H1 (cell line): ENCODE measurements at regions of chr1 and their contacts with region 1.

Region 1: GRCh38 chr1:208238710-208239472 is 5.3 kb downstream of the PLXNA2 start:
- DNase-seq: no peak
- H3K4me3 ChIP-seq: no peak overlapping the region; a peak in 1 of 8 replicates
- H3K27ac ChIP-seq: no peak overlapping the region
- H3K4me1 ChIP-seq: peaks cover 6 to 17% (median 11%) of the 10 kb centered on the region in 4 experiments
- H3K27me3 ChIP-seq: peaks cover 16 to 33% (median 28%) of the 10 kb centered on the region in 4 experiments
- CTCF ChIP-seq: peak; percentile 48 to 65 (median 59)
- EP300 ChIP-seq: no peak
- POLR2A ChIP-seq: no peak
- RAD21 ChIP-seq: peak; percentile 53 to 63

Region 2: DNA sequence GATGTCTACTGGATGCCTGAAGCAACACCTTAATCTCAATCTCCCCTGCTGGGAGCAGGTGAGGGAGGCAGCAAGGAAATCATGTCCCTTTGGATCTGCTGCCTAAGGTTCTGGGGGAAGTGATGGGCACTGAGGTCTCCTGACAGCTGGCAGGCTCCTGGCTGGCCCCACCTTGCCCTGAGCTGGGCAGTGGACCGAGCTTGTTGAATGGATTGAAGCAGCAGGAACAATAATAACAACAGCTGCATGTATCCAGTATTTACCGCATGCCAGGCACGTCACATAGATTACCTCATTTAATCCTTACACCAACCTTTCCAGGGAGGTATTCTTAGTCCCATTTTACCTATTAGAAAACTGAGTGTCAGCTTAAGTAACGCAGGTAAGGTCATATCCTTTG is 128.6 kb before region 1 on chr1:
- CTCF ChIA-PET with region 1: interaction called, 18 read pairs
- POLR2A ChIA-PET with region 1: no interaction called
- DNase-seq: no peak
- H3K4me3 ChIP-seq: no peak overlapping the region
- H3K27ac ChIP-seq: no peak overlapping the region
- H3K4me1 ChIP-seq: peaks cover 0 to 4% (median 0%) of the 10 kb centered on the region in 4 experiments; a peak in 3 of 7 replicates
- H3K27me3 ChIP-seq: no peaks in the 10 kb centered on the region
- CTCF ChIP-seq: no peak
- EP300 ChIP-seq: no peak
- POLR2A ChIP-seq: no peak
- RAD21 ChIP-seq: no peak

Region 3: GRCh38 chr1:208159555-208160258 is 79.2 kb before region 1 on chr1:
- CTCF ChIA-PET with region 1: interaction called, 10 read pairs
- POLR2A ChIA-PET with region 1: no interaction called
- DNase-seq: no peak
- H3K4me3 ChIP-seq: no peak overlapping the region
- H3K27ac ChIP-seq: no peak overlapping the region
- H3K4me1 ChIP-seq: peaks cover 4 to 21% (median 16%) of the 10 kb centered on the region in 4 experiments
- H3K27me3 ChIP-seq: 0 out of 7 replicates have a peak, but pooled peaks cover 0 to 4% (median 0%) of the 10 kb centered on the region in 4 experiments
- CTCF ChIP-seq: no peak
- EP300 ChIP-seq: no peak
- POLR2A ChIP-seq: no peak
- RAD21 ChIP-seq: no peak

Region 4: GRCh38 chr1:208201229-208201628 is 37.7 kb before region 1 on chr1:
- CTCF ChIA-PET with region 1: interaction called, 14 read pairs
- POLR2A ChIA-PET with region 1: no interaction called
- DNase-seq: no peak
- H3K4me3 ChIP-seq: no peak overlapping the region
- H3K27ac ChIP-seq: no peak overlapping the region
- H3K4me1 ChIP-seq: peaks cover 0 to 7% (median 0%) of the 10 kb centered on the region in 4 experiments; a peak in 2 of 7 replicates
- H3K27me3 ChIP-seq: no peaks in the 10 kb centered on the region
- CTCF ChIP-seq: no peak
- EP300 ChIP-seq: no peak
- POLR2A ChIP-seq: no peak
- RAD21 ChIP-seq: no peak

Region 5: DNA sequence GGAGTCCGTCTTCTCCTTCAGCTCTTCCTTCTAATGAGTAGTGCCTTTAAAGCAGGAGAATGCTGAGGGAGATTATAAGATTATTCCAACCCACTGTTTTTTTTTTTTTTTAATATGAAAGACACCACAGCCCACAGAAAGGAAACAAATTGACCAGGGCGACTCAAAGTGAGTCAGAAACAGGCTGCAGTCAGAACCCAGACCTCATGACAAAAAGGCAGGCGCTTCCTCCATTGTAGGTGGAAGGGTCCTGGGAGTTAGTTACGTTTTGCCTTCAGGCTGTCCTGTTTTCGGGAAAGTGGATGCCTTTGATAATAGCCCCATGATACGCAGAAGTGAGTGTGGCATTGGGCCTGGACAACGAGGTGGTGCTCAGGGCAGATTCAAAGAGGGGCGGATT is 15.8 kb before region 1 on chr1:
- CTCF ChIA-PET with region 1: interaction called, 14 read pairs
- POLR2A ChIA-PET with region 1: interaction called, 3 read pairs
- DNase-seq: no peak
- H3K4me3 ChIP-seq: no peak overlapping the region
- H3K27ac ChIP-seq: no peak overlapping the region
- H3K4me1 ChIP-seq: peaks cover 0 to 8% (median 3%) of the 10 kb centered on the region in 4 experiments; a peak in 5 of 7 replicates
- H3K27me3 ChIP-seq: no peaks in the 10 kb centered on the region
- CTCF ChIP-seq: no peak
- EP300 ChIP-seq: no peak
- POLR2A ChIP-seq: no peak
- RAD21 ChIP-seq: no peak

Region 6: DNA sequence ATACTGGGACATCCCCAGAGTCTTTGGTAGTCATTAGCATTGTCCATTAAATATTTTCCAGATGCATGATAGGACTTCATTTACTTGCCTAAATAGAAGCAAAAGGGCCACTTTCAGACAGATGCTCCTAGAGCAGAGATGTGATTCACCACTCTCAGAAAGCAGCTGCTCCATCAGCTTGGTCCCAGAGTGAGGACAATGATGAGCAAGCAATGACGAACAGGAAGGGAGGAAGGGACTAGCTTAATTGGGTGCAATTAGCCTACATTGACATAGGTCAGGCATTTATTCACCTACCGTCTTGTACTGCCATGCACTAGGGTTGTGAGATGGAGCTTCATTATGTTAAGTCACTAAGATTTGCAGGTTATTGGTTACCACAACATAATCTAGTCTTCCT is 90.4 kb after region 1 on chr1:
- CTCF ChIA-PET with region 1: no interaction called
- POLR2A ChIA-PET with region 1: no interaction called
- DNase-seq: no peak
- H3K4me3 ChIP-seq: no peak overlapping the region
- H3K27ac ChIP-seq: no peak overlapping the region
- H3K4me1 ChIP-seq: peaks cover 0 to 3% (median 0%) of the 10 kb centered on the region in 4 experiments; a peak in 1 of 7 replicates
- H3K27me3 ChIP-seq: peaks cover 0 to 3% (median 0%) of the 10 kb centered on the region in 4 experiments; a peak in 2 of 7 replicates
- CTCF ChIP-seq: no peak
- EP300 ChIP-seq: no peak
- POLR2A ChIP-seq: no peak
- RAD21 ChIP-seq: no peak